ENCODE measurements at regions of chr1 and their contacts with region 1.

Region 1: DNA sequence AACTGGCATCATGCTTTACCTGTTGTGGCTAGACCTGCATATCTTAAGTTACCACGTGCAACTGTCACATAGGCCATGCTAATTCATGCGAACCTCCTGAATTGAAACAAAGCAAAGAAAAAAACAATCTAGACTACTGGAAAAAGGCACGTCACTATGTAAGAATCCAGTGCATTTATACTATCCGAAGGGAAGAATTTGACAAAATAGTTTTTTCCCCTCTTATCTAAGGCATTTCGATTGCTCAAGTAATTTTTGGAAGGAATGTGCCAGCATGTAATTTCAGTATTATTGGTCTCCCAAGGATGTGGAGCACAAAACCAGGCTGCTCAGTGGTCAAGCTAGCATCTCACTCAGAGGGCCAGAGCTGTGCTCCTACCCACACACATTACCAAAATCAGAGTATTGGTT is 31.5 kb upstream of the C1orf198 start:
- DNase-seq: no peak
- ATAC-seq: peak; percentile 71

Region 2: GRCh38 chr1:230542054-230542453 is 357.8 kb before region 1 on chr1:
- intact Hi-C with region 1: no loop called
- DNase-seq: no peak
- ATAC-seq: no peak

Region 3: DNA sequence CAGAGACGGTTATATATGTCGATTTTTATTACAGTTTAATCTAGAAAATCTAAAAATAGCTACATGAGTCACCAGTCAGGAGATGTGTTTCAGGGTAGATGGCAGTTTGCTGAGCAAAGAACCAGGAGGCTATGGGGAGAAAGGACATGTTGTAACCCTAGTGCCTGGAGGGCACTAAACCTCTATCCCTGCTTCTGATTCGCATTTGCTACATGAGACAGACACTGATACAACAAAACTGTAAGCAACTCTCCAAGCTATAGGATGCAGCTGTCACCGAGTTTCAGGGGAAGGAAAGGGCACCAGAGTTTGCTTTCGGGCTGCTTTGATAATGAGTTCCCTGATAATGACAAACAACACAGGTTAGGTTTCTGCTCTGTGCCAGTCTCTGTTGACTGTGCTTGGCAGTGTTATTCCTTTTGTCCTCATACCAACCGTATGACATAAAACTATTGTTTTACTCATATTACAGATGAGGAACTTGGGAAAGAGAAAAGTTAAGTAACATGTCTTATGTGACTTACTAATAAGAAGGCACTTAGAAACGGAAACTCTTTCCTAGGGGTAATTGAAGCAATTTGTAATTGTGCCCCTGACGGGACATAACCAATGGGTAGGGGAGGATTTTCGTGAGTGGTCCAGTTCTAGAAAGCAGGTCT is 74.7 kb before region 1 on chr1:
- intact Hi-C with region 1: no loop called
- DNase-seq: no peak
- ATAC-seq: peak; percentile 71

Region 4: DNA sequence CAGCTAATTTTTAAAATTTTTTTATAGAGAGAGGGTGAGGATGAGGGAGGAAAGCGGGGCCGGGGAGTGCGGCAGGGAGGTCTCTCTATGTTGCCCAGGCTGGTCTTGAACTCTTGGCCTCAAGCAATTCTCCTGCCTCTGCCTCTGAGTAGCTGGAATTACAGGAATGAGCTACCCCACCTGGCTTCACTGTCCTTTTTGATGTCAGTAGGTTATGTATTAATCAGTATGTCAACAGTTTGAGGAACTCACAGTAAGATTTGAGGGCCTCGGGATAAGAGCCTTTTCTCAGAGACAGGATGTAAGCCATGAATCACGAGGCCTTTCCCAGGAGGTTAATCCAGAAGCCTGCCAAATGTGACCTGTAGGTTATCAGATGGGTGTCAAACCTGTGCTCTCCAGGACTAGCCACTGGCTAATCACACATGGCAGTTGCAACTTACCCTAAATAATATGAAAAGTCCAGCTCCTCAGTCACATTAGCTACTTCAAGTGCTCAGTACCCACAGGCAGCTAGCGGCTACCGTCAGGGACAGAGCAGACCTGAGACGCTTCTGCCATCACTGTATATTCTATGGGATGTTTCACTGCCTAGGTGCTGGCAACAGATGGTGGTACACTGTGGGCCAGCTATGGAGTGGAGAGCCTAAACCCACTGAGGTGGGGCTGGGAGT is 295.1 kb after region 1 on chr1:
- intact Hi-C with region 1: loop called (anchors 5 kb)
- DNase-seq: no peak
- ATAC-seq: no peak